H1 (cell line): ENCODE measurements at regions of chr2 and their contacts with region 1.

Region 1: GRCh38 chr2:68837164-68837860 is 33.9 kb downstream of the BMP10 start:
- DNase-seq: peak; percentile 38 to 84
- H3K4me3 ChIP-seq: no peak overlapping the region
- H3K27ac ChIP-seq: no peak overlapping the region
- H3K4me1 ChIP-seq: no peaks in the 10 kb centered on the region
- H3K27me3 ChIP-seq: no peaks in the 10 kb centered on the region
- CTCF ChIP-seq: peak; percentile 78 to 91 (median 85)
- EP300 ChIP-seq: no peak
- POLR2A ChIP-seq: no peak
- RAD21 ChIP-seq: peak; percentile 62 to 75

Region 2: GRCh38 chr2:68849579-68850030 is 12.3 kb after region 1 on chr2:
- CTCF ChIA-PET with region 1: interaction called, 113 read pairs
- POLR2A ChIA-PET with region 1: no interaction called
- DNase-seq: no peak
- H3K4me3 ChIP-seq: no peak overlapping the region
- H3K27ac ChIP-seq: no peak overlapping the region
- H3K4me1 ChIP-seq: no peaks in the 10 kb centered on the region
- H3K27me3 ChIP-seq: no peaks in the 10 kb centered on the region; a peak in 1 of 7 replicates
- CTCF ChIP-seq: no peak
- EP300 ChIP-seq: no peak
- POLR2A ChIP-seq: no peak
- RAD21 ChIP-seq: no peak

Region 3: GRCh38 chr2:68857855-68858456 is 20.6 kb after region 1 on chr2:
- CTCF ChIA-PET with region 1: interaction called, 113 read pairs
- POLR2A ChIA-PET with region 1: no interaction called
- DNase-seq: no peak
- H3K4me3 ChIP-seq: no peak overlapping the region
- H3K27ac ChIP-seq: no peak overlapping the region
- H3K4me1 ChIP-seq: no peaks in the 10 kb centered on the region
- H3K27me3 ChIP-seq: no peaks in the 10 kb centered on the region
- CTCF ChIP-seq: no peak
- EP300 ChIP-seq: no peak
- POLR2A ChIP-seq: no peak
- RAD21 ChIP-seq: no peak

Region 4: GRCh38 chr2:68877079-68877772 is 39.9 kb after region 1 on chr2:
- CTCF ChIA-PET with region 1: interaction called, 10 read pairs
- POLR2A ChIA-PET with region 1: interaction called, 3 read pairs
- DNase-seq: no peak
- H3K4me3 ChIP-seq: no peak overlapping the region
- H3K27ac ChIP-seq: no peak overlapping the region
- H3K4me1 ChIP-seq: no peaks in the 10 kb centered on the region
- H3K27me3 ChIP-seq: no peaks in the 10 kb centered on the region
- CTCF ChIP-seq: no peak
- EP300 ChIP-seq: no peak
- POLR2A ChIP-seq: no peak
- RAD21 ChIP-seq: no peak

Region 5: GRCh38 chr2:68909793-68910674 is 72.7 kb after region 1 on chr2:
- CTCF ChIA-PET with region 1: interaction called, 21 read pairs
- POLR2A ChIA-PET with region 1: no interaction called
- DNase-seq: peak in 1 of 2 experiments; percentile 80
- H3K4me3 ChIP-seq: no peak overlapping the region
- H3K27ac ChIP-seq: no peak overlapping the region
- H3K4me1 ChIP-seq: peaks cover 0 to 7% (median 4%) of the 10 kb centered on the region in 4 experiments; a peak in 4 of 7 replicates
- H3K27me3 ChIP-seq: no peaks in the 10 kb centered on the region
- CTCF ChIP-seq: peak; percentile 54 to 77 (median 62)
- EP300 ChIP-seq: no peak
- POLR2A ChIP-seq: no peak
- RAD21 ChIP-seq: peak; percentile 77 to 78